ENCODE measurements at regions of chr19 and their contacts with region 1.

Region 1: GRCh38 chr19:3062168-3063102 is at the start of gene TLE5:
- DNase-seq: peak; percentile 84
- H3K4me3 ChIP-seq: peak within 1 kb of the TSS; percentile 68 to 98 (median 87)
- H3K27ac ChIP-seq: peak within 1 kb of the TSS; percentile 93 to 99 (median 96)
- H3K4me1 ChIP-seq: peaks cover 0 to 46% (median 44%) of the 10 kb centered on the region in 4 donors
- H3K27me3 ChIP-seq: no peaks in the 10 kb centered on the region
- CTCF ChIP-seq: no peak
- EP300 ChIP-seq: no peak
- POLR2A ChIP-seq: no peak
- total RNA-seq, gene TLE5: 581 to 711 (median 629) TPM

Region 2: GRCh38 chr19:2950286-2951124 is 111.9 kb before region 1 on chr19:
- intact Hi-C with region 1: loop called (anchors 2 kb)
- DNase-seq: peak; percentile 100
- H3K4me3 ChIP-seq: peak overlapping the region; percentile 52 to 76 (median 64)
- H3K27ac ChIP-seq: peak overlapping the region; percentile 90 to 95 (median 92)
- H3K4me1 ChIP-seq: peaks cover 0 to 22% (median 16%) of the 10 kb centered on the region in 4 donors
- H3K27me3 ChIP-seq: no peaks in the 10 kb centered on the region
- CTCF ChIP-seq: no peak
- EP300 ChIP-seq: no peak
- POLR2A ChIP-seq: peak; percentile 89 to 95

Region 3: DNA sequence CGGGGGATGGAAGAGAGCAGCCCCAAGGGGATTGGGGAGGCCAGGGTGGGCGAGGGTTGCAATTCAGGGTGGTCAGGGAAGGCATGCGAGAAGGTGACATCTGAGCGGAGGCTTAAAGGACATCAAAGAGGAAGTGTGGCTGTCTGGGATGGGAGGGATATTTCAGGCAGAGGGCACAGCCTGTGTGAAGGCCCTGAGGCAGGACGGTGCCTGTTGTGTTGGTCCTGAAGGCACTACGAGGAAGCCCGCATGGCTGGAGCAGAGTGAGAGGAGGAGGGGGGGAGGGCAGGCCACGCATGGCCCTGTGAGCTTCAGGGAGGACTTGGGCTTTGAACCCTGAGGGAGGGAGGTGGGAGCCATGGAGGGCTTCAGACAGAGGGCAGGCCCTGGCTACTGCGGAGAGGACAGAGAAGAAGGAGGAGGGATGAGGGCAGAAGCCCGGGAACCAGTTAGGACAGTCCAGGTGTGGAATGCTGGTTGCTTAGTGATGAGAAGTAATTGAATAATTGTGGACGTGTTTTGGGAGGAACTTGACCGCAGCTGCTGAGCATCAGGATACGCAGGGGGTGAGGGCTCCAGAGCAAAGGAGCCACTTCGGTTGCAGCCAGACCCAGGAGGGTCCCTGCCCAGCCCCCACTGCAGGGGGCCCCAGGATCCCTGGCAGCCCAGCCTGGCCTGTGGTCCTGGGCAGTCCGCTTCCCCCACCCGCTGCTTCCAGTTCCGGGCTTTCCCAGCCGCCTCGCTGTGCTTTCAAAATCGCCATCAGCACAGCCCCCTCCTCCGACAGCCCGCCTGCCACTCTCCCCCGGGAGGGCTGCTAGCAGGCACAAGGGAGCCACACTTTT is 78.9 kb before region 1 on chr19:
- intact Hi-C with region 1: loop called (anchors 1 kb)
- DNase-seq: peak; percentile 86
- H3K4me3 ChIP-seq: peak overlapping the region; percentile 16 to 52 (median 44)
- H3K27ac ChIP-seq: peak overlapping the region; percentile 85 to 87 (median 86)
- H3K4me1 ChIP-seq: peaks cover 0 to 26% (median 23%) of the 10 kb centered on the region in 4 donors
- H3K27me3 ChIP-seq: no peaks in the 10 kb centered on the region
- CTCF ChIP-seq: no peak
- EP300 ChIP-seq: no peak
- POLR2A ChIP-seq: no peak

Region 4: GRCh38 chr19:3163230-3163886 is 100.9 kb after region 1 on chr19:
- intact Hi-C with region 1: no loop called
- DNase-seq: peak; percentile 82
- H3K4me3 ChIP-seq: no peak overlapping the region
- H3K27ac ChIP-seq: no peak overlapping the region
- H3K4me1 ChIP-seq: peaks cover 0 to 5% (median 2%) of the 10 kb centered on the region in 4 donors
- H3K27me3 ChIP-seq: no peaks in the 10 kb centered on the region
- CTCF ChIP-seq: peak; percentile 76 to 95 (median 88)
- EP300 ChIP-seq: no peak
- POLR2A ChIP-seq: no peak

Region 5: DNA sequence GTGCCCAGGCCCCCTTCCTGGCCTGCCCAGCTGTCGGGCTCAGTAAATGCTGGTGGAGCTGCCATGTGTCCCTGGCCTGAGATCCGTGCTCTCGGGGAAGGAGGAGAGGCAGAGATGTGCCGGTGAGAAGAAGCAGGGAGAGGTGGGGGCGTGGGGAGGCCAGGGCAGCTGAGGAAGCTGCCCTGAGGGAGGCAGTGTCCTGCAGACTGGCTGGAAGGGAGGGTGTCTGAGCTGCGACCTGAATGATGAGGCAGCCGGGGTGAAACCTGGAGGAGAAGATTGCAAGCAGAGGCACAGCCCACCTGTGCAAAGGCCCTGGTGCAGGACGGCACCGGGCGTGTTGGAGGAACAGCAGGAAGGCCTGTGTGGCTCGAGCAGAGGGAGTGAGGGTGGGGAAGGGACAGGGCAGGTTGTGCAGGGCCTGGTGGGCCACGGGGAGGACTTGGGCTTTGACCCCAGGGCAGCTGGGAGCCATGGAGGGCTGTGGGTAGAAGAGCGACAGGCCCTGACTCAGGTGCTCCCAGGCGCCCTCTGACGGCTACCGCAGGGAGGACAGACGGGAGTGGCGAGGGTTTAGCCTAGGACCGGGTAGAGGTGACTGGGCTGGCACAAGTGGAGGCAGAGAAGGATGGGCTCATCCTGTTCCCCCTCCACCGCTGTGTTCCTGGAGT is 148.0 kb after region 1 on chr19:
- intact Hi-C with region 1: no loop called
- DNase-seq: no peak
- H3K4me3 ChIP-seq: no peak overlapping the region
- H3K27ac ChIP-seq: no peak overlapping the region
- H3K4me1 ChIP-seq: no peaks in the 10 kb centered on the region
- H3K27me3 ChIP-seq: no peaks in the 10 kb centered on the region
- CTCF ChIP-seq: peak in 3 of 4 experiments; percentile 20 to 47 (median 23)
- EP300 ChIP-seq: no peak
- POLR2A ChIP-seq: no peak